ENCODE measurements at regions of chr19 and their contacts with region 1.

Region 1: DNA sequence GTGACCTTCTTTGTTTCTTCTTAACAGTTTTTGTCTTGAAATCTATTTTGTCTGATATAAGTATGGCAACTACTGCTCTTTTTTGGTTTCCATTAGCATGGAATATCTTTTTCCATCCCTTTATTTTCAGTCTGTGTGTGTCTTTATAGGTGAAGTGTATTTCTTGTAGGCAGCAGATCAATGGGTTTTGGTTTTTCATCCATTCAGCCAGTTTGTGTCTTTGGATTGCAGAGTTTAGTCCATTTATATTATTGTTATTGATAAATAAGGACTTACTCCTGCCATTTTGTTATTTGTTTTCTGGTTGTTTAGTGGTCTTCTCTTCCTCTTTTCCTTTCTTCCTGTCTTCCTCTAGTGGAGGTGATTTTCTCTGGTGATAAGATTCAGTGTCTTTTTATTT is 54.4 kb downstream of the ZNF136 start:
- DNase-seq: no peak
- H3K4me3 ChIP-seq: no peak overlapping the region
- H3K27ac ChIP-seq: no peak overlapping the region
- H3K4me1 ChIP-seq: no peaks in the 10 kb centered on the region
- H3K27me3 ChIP-seq: no peaks in the 10 kb centered on the region
- CTCF ChIP-seq: no peak
- EP300 ChIP-seq: no peak
- POLR2A ChIP-seq: no peak

Region 2: GRCh38 chr19:12255372-12255771 is 38.0 kb after region 1 on chr19:
- in situ Hi-C with region 1: no loop called
- intact Hi-C with region 1: loop called (anchors 1 kb)
- DNase-seq: no peak
- H3K4me3 ChIP-seq: no peak overlapping the region
- H3K27ac ChIP-seq: no peak overlapping the region
- H3K4me1 ChIP-seq: no peaks in the 10 kb centered on the region
- H3K27me3 ChIP-seq: no peaks in the 10 kb centered on the region
- CTCF ChIP-seq: no peak
- EP300 ChIP-seq: no peak
- POLR2A ChIP-seq: no peak

Measured in transverse colon (tissue), 4 donors.